ENCODE measurements at regions of chr10 and their contacts with region 1.

Region 1: GRCh38 chr10:96089670-96090462 is 40.2 kb upstream of the ZNF518A start:
- DNase-seq: peak; percentile 84
- ATAC-seq: peak; percentile 96
- H3K4me3 ChIP-seq: peak overlapping the region; percentile 79
- H3K27ac ChIP-seq: peak overlapping the region; percentile 95
- H3K4me1 ChIP-seq: 0 out of 2 replicates have a peak, but pooled peaks cover 3% of the 10 kb centered on the region
- H3K27me3 ChIP-seq: no peaks in the 10 kb centered on the region
- CTCF ChIP-seq: no peak
- EP300 ChIP-seq: peak in 1 of 2 experiments; percentile 54; a peak in 1 of 4 replicates
- POLR2A ChIP-seq: peak; percentile 97
- RAD21 ChIP-seq: no peak

Region 2: DNA sequence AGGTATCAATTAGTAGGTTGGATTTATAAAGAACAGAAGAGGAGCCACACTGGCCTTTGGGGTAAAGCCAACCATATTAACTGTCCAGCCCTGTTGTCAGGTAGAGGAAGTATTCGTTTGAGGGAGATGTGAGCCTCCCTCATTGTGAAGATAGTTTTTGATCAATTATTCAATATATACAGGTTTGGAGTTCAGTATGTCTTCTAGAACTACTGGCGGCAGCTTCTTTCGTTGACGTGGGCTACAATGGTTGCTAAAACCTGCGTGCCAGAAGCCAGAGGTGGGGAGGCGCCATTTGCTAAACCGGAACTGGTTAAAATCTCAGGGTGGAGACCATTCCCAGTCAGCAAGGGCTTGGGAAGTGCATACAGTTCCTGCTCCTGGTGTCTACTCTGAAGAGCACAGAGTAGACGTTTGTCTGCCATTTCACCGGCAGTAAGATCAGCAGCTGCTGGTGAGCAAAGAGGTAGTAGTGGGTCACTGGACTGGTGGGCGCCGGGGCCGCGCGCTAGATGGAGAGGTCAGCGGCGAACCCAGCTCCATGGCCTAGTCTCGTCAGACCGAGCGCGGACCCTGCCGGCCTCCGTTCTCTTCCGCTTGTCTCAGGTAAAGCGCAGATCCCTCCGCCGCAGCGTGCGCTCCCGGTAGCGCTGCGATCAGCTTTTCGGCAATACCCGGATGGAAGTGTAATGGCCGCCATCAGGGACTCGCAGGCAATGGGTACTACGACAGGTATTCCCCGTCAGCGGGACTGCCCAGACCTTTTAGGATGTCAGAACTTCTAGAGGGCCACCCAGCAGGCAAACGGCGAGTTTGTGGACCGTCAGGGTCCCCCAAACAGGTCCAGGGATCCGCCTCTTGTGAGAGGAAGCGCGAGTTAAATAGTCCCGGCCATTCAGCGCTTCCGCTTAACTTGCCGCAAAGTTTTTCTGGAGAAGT is 39.8 kb after region 1 on chr10 and contains the start of gene ZNF518A:
- CTCF ChIA-PET with region 1: interaction called, 21 read pairs
- POLR2A ChIA-PET with region 1: interaction called, 35 read pairs
- RAD21 ChIA-PET with region 1: interaction called, 27 read pairs
- SMC1A ChIA-PET with region 1: interaction called, 20 read pairs
- in situ Hi-C with region 1: no loop called
- intact Hi-C with region 1: loop called (anchors 1 kb)
- DNase-seq: peak; percentile 82
- ATAC-seq: peak; percentile 91
- H3K4me3 ChIP-seq: peak within 1 kb of the TSS; percentile 87
- H3K27ac ChIP-seq: peak within 1 kb of the TSS; percentile 100
- H3K4me1 ChIP-seq: no peaks in the 10 kb centered on the region; the same call in 1 of the 2 replicates
- H3K27me3 ChIP-seq: no peaks in the 10 kb centered on the region
- CTCF ChIP-seq: no peak
- EP300 ChIP-seq: no peak
- POLR2A ChIP-seq: peak; percentile 92
- RAD21 ChIP-seq: no peak
- polyA plus RNA-seq, gene ZNF518A: 3.7 to 11.3 TPM

Measured in GM12878 (cell line).